Ovary (tissue), 10 donors: ENCODE measurements at regions of chr19 and their contacts with region 1.

Region 1: GRCh38 chr19:32570081-32570785 is 10.8 kb upstream of the PDCD5 start:
- DNase-seq: peak; percentile 38 to 51 (median 47)
- H3K4me3 ChIP-seq: no peak overlapping the region
- H3K27ac ChIP-seq: no peak overlapping the region
- H3K4me1 ChIP-seq: no peaks in the 10 kb centered on the region
- H3K27me3 ChIP-seq: no peaks in the 10 kb centered on the region
- CTCF ChIP-seq: peak in 2 of 3 donors; percentile 20 to 22
- EP300 ChIP-seq: no peak
- POLR2A ChIP-seq: no peak

Region 2: DNA sequence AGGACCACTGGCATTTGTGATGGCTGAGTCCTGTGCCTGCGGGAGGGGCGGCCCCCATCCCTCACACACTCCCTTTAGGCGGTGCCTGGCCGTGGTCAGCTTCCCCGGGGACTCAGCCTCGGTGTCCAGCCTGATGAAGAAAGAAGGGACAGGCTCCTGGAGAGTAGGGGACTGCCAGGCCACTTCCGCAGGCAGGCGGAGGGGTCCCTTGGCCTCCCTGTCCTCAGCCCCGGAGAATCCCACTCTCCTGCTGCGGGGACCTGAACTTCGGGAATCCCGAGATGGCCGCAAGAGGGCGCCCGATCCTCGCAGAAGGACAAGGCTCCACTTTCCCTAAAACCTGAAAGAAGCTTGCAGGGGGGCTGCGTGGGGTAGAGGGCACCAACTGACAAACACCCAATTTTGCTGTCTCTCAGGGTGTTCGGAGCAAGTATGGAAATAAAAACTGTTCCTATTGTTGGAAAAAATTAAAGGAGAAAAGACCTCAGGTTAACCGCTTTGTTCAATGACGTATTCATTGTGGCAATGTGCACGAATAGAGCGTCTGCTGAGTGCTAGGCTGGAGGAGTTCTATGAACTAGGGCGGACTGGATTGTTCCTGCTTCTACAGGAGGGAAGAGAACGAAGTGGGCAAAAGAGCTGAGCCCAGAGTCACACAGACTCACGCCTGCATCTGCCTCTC is 1900.8 kb before region 1 on chr19:
- intact Hi-C with region 1: loop called in 1 of 4 experiments (anchors 10 kb)
- DNase-seq: peak; percentile 77 to 90 (median 87)
- H3K4me3 ChIP-seq: peak overlapping the region; percentile 12
- H3K27ac ChIP-seq: peak overlapping the region; percentile 9 to 73
- H3K4me1 ChIP-seq: peaks cover 4% of the 10 kb centered on the region
- H3K27me3 ChIP-seq: no peaks in the 10 kb centered on the region
- CTCF ChIP-seq: peak; percentile 57 to 85 (median 72)
- EP300 ChIP-seq: no peak
- POLR2A ChIP-seq: no peak

Region 3: DNA sequence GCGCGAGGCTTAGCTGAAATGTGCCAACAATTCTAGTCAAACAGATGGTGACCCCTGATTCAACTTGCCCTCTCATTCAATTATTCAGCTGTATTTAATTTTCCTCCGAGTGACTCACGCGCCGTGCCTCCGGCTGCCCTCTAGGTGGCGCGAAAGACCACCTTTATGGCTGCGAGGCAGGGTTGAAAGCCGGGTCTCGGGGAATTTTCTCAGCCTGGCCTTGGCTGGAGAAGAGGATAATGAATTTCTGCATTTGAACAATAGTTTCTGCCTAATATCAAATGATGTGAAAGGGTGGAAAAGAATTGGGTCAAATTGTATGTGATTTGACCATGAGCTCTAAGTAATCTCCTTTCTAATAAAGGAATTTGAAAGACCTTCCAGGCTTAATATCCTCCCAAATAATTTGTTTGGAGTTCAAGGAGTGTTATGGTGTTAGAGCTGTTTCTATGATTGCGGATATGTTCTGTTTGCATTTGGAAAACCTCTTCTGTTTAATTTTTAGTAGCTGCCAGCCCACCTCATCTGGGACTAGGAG is 1887.2 kb before region 1 on chr19:
- intact Hi-C with region 1: loop called in 3 of 4 experiments (anchors 5 to 10 kb)
- DNase-seq: peak; percentile 68 to 87 (median 82)
- H3K4me3 ChIP-seq: no peak overlapping the region
- H3K27ac ChIP-seq: no peak overlapping the region
- H3K4me1 ChIP-seq: no peaks in the 10 kb centered on the region
- H3K27me3 ChIP-seq: no peaks in the 10 kb centered on the region
- CTCF ChIP-seq: peak; percentile 74 to 91 (median 81)
- EP300 ChIP-seq: no peak
- POLR2A ChIP-seq: no peak

Region 4: DNA sequence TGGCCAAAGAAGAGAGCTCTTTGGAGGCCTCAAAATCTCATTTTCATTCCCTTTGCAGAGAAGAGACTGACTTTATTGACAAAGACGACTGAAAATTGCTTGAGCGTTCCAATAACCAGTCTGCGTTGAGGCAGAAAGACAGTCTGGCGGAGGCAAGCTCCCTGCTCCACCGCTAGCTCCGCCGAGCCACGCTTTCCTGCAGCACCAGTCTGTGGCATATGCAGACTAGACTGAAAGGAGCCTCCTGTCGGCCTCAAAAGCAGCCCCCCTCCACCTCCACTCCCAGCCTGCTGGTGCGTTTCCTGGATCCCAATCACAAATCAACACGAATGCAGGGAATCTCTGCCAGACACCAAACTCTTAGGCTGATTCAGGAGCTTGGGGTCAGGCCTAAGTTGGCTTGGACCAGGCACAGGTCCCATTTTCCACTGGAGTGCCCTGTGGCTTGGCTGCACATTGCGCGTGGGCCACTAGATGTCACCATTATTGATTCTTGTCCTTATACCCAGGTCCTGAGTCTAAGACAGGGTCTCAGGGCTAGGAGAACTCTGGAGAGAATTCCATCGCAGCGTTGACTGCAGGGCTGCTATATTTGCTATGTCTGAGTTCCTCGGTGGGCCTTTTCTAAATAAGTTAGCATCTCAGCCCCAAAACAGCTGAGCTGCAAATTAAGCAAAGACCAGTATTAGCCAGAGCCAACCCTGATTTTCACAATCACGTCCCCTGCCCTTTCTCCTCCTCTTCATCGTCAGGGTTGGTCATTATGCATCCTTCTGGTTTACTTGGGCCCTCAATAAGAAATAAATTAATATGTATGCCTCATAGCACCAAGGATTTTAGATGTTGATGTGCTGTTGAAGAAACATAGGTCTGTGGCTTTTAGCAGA is 230.0 kb before region 1 on chr19:
- intact Hi-C with region 1: loop called in 1 of 4 experiments (anchors 10 kb)
- DNase-seq: peak in 3 of 5 donors; percentile 26 to 46 (median 28)
- H3K4me3 ChIP-seq: no peak overlapping the region
- H3K27ac ChIP-seq: no peak overlapping the region
- H3K4me1 ChIP-seq: peaks cover 3% of the 10 kb centered on the region
- H3K27me3 ChIP-seq: no peaks in the 10 kb centered on the region
- CTCF ChIP-seq: no peak
- EP300 ChIP-seq: no peak
- POLR2A ChIP-seq: no peak

Region 5: DNA sequence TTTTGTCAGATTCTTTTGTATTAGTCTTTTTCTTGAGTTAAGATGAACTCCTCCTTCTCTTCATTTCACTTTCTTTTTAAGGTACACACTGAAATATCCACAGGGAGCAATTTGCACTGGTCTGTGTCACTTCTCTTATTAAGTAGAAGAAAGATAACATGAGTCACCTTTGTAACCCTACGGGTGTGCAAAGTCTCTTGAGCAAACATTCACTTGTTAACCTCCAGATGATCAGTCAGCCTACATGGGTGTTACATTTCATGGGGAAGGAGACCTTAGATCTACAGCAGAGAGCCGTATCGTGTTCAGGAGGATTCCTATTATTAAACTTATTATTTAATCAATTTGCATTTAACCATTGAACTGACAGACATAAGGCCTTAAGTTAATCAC is 219.8 kb before region 1 on chr19:
- intact Hi-C with region 1: no loop called
- DNase-seq: no peak
- H3K4me3 ChIP-seq: no peak overlapping the region
- H3K27ac ChIP-seq: no peak overlapping the region
- H3K4me1 ChIP-seq: peaks cover 6% of the 10 kb centered on the region
- H3K27me3 ChIP-seq: no peaks in the 10 kb centered on the region
- CTCF ChIP-seq: no peak
- EP300 ChIP-seq: no peak
- POLR2A ChIP-seq: no peak